ENCODE measurements at regions of chr12 and their contacts with region 1.

Region 1: DNA sequence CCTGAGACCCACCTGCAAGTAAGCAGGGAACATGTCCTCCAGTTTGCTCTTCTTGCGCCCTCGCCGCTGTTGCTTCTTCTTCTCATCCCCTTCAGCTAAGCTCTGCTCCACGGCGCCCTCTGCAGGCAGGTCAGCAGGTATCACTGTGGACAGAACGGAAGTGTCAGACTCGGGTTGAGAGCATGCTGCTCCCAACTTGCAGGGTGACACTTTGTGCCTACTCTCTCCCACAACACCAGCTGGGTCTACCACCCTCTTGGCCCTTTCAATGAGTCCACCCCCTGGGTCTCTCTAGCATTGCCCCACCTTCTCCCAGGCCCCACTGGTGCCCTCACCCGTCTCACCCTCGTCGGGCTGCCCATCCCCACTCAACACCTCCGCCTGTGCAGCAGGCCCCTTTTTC is 16.7 kb downstream of the KMT2D start:
- DNase-seq: peak; percentile 91
- ATAC-seq: peak; percentile 91
- H3K4me3 Mint-ChIP-seq: no peak overlapping the region
- H3K27ac Mint-ChIP-seq: no peak overlapping the region
- H3K4me1 Mint-ChIP-seq: peaks cover 2% of the 10 kb centered on the region
- H3K27me3 Mint-ChIP-seq: no peaks in the 10 kb centered on the region

Region 2: GRCh38 chr12:48532601-48533000 is 511.3 kb before region 1 on chr12:
- CTCF ChIA-PET with region 1: no interaction called
- POLR2A ChIA-PET with region 1: no interaction called
- intact Hi-C with region 1: no loop called
- DNase-seq: no peak
- ATAC-seq: no peak
- H3K4me3 Mint-ChIP-seq: no peak overlapping the region
- H3K27ac Mint-ChIP-seq: no peak overlapping the region
- H3K4me1 Mint-ChIP-seq: peaks cover 20% of the 10 kb centered on the region
- H3K27me3 Mint-ChIP-seq: no peaks in the 10 kb centered on the region

Region 3: DNA sequence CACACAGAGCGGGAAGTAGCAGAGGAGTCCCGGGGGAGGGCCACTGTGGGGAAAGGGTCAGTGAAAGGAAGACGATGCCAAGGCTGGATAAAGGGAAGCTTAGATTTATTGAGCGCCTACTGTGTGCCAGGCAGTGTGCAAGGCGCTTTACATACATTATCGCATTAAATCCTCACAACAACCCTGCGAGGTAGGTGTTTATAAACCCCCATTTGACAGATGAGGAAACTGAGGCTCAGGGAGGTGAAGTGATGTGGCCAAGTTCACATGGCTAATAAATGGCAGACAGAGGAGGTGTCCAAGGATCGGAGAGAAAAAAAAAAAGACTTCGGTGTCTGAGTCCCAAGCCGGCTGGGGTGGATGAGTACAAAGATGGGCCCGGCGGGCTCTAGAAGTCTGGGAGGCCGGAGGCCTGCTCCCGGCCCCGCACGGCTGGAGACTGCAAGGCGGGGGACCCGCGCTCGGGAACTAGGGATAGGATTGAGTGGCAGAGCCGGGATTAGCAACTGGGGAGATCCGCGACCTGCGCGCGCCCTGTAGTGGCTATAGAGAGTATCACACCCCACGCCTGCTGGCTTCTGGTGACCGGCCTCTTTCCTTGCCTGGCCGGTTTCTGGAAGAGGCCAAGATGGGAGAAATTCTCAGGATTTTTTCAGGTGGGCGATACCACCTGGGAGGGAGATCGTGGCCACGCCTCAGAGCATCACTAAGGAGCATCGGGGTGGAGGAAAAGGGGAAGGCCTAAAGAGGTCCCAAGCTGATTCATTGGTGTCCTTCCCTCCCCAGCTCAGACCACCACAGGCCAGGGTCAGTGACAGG is 48.6 kb before region 1 on chr12:
- CTCF ChIA-PET with region 1: interaction called, 16 read pairs
- POLR2A ChIA-PET with region 1: no interaction called
- intact Hi-C with region 1: loop called in 1 of 2 experiments (anchors 1 kb)
- DNase-seq: peak; percentile 77
- ATAC-seq: peak; percentile 13
- H3K4me3 Mint-ChIP-seq: no peak overlapping the region
- H3K27ac Mint-ChIP-seq: no peak overlapping the region
- H3K4me1 Mint-ChIP-seq: peaks cover 26% of the 10 kb centered on the region
- H3K27me3 Mint-ChIP-seq: peaks cover 52% of the 10 kb centered on the region

Region 4: DNA sequence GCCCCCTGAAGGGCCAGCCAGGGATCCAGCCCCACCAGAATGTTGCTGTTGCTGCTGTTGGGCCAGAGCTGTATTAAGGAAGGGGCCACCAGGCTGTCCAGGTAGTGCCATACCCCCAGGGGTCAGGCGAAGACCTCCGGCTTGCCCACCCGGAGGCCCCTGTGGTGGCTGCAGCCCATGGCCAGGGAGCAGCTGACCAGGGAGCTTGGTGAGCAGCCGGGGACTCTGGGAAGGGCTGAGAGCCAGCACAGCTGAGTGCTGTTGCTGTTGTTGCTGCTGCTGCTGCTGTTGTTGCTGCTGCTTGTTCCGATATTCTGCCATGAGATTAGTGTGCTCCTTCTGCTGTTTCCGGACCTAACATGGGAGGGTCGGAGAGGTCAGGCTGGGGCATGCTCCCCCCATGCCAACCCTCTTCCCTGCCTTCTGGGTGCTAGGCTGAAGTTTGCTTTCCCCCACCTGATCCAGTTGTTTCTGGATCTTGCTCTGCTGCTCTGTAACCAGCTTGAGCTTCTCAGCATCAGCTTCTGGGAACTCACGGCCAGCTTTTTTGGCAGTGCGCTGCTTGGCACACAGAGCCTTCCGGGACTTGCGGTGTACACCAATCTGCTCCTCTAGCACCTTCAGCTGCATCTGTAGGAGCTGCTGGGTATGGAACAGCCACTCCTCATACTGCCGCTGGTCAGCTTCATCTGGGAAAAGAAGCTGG is 10.1 kb before region 1 on chr12:
- CTCF ChIA-PET with region 1: interaction called, 27 read pairs
- POLR2A ChIA-PET with region 1: no interaction called
- intact Hi-C with region 1: no loop called
- DNase-seq: no peak
- ATAC-seq: no peak
- H3K4me3 Mint-ChIP-seq: no peak overlapping the region
- H3K27ac Mint-ChIP-seq: peak overlapping the region; percentile 13
- H3K4me1 Mint-ChIP-seq: no peaks in the 10 kb centered on the region
- H3K27me3 Mint-ChIP-seq: no peaks in the 10 kb centered on the region

Region 5: DNA sequence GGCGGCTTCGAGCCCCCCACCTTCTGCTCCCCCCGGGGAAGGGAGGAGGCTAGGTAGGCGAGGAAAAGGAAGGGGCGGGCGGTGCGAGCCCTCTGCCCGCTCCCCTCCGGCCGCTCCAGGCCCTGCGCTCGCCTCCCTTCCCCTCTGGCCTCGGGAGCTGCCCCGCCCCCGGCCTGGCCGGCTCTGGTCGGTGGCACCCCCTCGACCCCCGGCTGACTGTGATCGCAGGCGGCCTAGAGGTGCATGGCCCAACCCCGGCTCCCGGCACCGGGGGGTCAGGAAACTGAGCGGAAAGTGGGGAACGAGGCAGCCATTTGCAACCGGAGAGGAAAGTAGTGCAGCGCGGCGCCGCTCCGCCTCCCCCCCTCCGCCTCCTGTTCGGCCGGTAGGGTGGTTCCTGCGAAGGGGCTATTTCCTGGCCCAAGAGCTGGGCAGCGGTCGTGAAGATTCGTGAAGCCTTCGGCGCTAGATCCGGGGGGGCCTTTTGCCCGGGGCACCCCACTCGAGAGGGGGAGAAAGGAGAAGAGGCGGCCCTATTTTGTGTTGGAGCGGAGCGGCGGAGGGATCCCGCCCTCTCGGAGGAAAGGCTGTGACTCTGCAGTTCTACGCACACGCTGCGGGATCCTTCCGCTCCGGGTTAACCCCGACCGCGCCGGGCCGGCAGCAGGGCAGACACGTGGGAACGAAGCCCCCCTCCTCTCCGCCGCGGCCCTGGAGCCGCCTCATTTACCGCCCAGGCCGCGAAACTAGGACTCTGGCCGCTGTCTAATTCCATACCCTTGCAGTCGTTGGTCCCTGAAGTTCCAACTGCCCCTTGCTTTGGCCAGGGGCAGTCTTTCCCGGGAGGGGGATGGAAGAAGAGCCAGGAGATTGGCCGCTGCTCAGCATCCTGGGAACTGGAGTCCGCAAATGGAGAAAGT is 16.6 kb after region 1 on chr12 and contains the start of gene KMT2D:
- CTCF ChIA-PET with region 1: interaction called, 21 read pairs
- POLR2A ChIA-PET with region 1: no interaction called
- intact Hi-C with region 1: no loop called
- DNase-seq: peak; percentile 94
- ATAC-seq: peak; percentile 75
- H3K4me3 Mint-ChIP-seq: peak within 1 kb of the TSS; percentile 98
- H3K27ac Mint-ChIP-seq: peak within 1 kb of the TSS; percentile 95
- H3K4me1 Mint-ChIP-seq: peaks cover 45% of the 10 kb centered on the region
- H3K27me3 Mint-ChIP-seq: no peaks in the 10 kb centered on the region
- total RNA-seq, gene KMT2D: 48.3 to 58.2 TPM

Region 6: DNA sequence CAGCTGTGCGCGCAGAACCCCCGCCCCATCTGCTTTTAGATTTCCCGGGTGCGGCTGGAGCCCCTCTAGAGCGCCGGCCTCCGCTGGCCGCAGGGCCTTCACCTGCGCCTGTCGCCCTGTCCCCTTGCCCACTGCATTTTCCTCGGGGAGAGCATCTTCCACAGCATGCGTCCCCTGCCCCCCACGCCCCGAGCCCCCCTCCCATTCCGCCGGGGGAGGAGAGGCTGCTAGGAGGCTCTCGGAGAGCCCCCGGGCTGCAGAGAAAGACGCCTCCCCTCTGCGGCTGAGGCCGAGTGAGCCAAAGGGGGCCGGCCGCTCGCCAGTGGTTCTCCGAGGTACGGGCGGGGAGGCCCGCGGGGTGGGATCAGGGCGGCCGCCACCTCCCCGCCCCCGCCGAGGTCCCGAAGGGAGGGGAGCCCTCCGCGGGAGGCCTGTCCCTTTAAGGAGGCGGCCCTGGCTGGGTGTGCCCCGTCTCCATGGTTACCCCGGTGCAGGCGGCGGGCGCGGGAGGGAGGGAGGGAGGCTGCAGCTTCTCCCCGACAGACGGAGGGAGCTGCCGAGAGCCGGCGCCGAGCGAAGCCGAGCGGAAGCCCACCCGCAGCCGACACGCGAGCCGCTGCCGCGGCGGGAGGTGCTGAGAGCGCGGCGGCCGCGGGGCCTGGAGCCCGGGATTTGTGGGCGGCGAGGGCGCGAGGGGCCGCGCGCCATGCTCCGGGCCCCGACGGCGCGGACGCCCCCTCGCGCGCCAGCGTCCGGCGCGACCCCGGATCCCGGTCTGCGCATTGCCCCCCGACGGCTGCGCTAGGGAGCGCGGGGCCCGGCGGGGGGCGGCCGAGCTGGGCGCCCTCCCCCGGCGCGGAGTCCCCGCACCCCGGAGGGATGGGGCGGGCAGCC is 494.9 kb after region 1 on chr12 and contains the start of gene KCNH3:
- CTCF ChIA-PET with region 1: no interaction called
- POLR2A ChIA-PET with region 1: no interaction called
- intact Hi-C with region 1: no loop called
- DNase-seq: peak; percentile 90
- ATAC-seq: peak; percentile 82
- H3K4me3 Mint-ChIP-seq: peak within 1 kb of the TSS; percentile 55
- H3K27ac Mint-ChIP-seq: no peak within 1 kb of the TSS
- H3K4me1 Mint-ChIP-seq: peaks cover 4% of the 10 kb centered on the region
- H3K27me3 Mint-ChIP-seq: peaks cover 17% of the 10 kb centered on the region
- total RNA-seq, gene KCNH3: 2.4 to 3.3 TPM